ENCODE measurements at regions of chr10 and their contacts with region 1.

Region 1: DNA sequence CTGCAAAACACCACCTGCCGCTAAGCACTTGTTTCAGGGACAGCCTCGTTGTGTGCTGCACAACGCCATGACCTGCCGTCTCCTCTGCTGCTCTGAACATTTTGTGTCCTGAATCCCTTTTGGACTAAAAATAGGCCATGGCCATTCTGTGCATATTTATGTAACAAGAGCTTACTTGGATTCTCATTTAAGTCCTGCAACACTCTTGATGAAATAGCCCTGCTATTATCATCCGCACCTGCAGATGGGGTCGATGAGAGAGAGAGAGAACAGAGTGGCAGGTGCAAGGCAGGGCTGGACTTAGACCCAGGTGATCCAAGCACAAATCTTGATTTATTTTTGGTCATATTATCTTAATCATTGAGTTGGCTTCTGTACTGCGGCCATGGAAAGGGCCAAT is 121.2 kb upstream of the PRKCQ start:
- DNase-seq: peak; percentile 6 to 58
- ATAC-seq: peak; percentile 89 to 94
- H3K4me3 ChIP-seq: no peak overlapping the region
- H3K27ac ChIP-seq: peak overlapping the region; percentile 27 to 62 (median 54)
- H3K4me1 ChIP-seq: peaks cover 10 to 18% of the 10 kb centered on the region in 2 donors
- H3K27me3 ChIP-seq: no peaks in the 10 kb centered on the region
- CTCF ChIP-seq: peak in 1 of 5 experiments; percentile 10
- POLR2A ChIP-seq: no peak

Region 2: DNA sequence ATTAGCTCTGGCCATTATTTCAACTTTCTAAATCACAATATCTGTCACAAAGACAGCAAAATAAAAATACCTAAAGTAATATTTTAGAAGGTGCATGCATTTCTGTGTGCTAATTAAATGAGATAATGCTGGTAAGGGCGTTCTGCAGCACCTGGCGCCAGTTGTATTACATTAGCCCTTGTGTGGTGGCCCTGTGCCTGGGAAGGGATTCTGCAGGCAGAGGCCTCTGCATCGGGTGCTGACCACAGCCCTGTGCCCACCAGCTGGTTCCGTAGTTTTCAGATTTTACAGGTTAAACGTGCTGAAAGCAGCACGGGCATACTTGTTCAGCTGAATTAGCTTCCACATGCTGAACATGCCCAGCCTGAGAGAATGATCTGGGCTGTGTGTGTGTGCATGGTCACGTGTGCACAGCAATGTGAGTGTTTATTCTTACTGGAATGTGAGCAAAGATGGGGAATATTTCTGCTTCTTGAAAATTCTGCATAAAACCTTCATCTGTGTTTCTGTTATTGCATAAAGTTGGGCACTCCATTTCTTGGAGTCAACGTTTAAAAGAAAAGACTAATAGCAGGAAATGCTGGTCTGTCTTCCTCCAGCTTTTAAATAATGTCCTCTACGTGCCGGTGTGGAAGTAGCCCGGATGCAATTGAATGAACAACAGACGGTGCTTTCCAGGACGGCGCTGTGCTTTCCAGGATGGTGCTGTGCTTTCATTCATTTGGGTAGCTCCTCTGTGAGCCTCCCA is 36.6 kb after region 1 on chr10:
- in situ Hi-C with region 1: no loop called
- intact Hi-C with region 1: loop called (anchors 5 kb)
- DNase-seq: peak in 1 of 2 donors; percentile 32
- ATAC-seq: peak; percentile 38 to 49
- H3K4me3 ChIP-seq: peak overlapping the region; percentile 41 to 50 (median 44)
- H3K27ac ChIP-seq: peak overlapping the region; percentile 81 to 93 (median 89)
- H3K4me1 ChIP-seq: peaks cover 74 to 75% of the 10 kb centered on the region in 2 donors
- H3K27me3 ChIP-seq: no peaks in the 10 kb centered on the region
- CTCF ChIP-seq: no peak
- POLR2A ChIP-seq: no peak

Measured in gastrocnemius medialis (tissue), 4 donors.